Heart right ventricle (tissue), 16 donors: ENCODE measurements at regions of chr15 and their contacts with region 1.

Region 1: DNA sequence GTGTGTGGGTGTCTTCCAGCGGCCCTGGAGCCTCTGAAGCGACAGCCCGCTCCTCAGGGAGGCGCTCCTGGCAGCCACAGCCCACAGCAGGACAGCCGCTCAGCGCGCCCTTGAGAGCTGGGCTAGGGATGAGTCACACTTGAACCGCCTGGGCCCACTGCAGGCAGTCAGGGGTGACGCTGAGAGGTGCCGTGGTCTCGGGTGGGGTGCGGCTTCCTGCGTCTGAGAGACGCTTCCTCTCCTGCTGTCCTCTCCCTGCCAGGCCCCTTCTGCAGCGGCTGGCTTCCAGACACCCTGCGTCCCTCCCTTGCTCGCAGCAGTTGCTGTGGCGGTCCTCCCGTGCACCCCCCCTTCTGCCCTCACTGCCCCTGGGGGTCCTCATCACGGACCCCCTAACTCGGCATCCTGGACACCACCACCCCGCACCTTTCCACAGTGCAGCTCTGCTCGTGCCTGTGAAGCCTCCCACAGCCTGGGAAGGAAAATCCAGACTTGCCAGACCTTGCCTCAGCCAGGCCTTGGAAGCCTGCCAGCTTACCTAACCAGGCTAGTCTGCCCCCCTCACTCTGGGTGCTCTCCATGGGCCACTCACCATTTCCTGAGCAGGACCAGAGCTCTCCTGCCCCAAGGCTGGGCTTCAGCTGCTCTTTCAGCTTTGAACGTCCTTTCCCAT is 1.1 kb upstream of the SPTBN5 start:
- DNase-seq: peak; percentile 82 to 86
- ATAC-seq: peak; percentile 74 to 92 (median 88)
- H3K4me3 ChIP-seq: peak overlapping the region in 9 of 10 donors; percentile 26 to 55 (median 51)
- H3K27ac ChIP-seq: peak overlapping the region; percentile 77 to 93 (median 86)
- H3K4me1 ChIP-seq: peaks cover 19 to 43% (median 30%) of the 10 kb centered on the region in 9 donors
- H3K27me3 ChIP-seq: no peaks in the 10 kb centered on the region
- CTCF ChIP-seq: peak in 5 of 9 donors; percentile 17 to 52 (median 40)

Region 2: GRCh38 chr15:41774062-41774881 is 120.7 kb before region 1 on chr15 and contains the start of gene MAPKBP1:
- intact Hi-C with region 1: loop called in 3 of 10 experiments (anchors 5 to 10 kb)
- DNase-seq: peak; percentile 96 to 97
- ATAC-seq: peak; percentile 96 to 99 (median 98)
- H3K4me3 ChIP-seq: peak within 1 kb of the TSS; percentile 45 to 85 (median 77)
- H3K27ac ChIP-seq: peak within 1 kb of the TSS; percentile 52 to 88 (median 84)
- H3K4me1 ChIP-seq: peaks cover 13 to 55% (median 43%) of the 10 kb centered on the region in 9 donors
- H3K27me3 ChIP-seq: no peaks in the 10 kb centered on the region
- CTCF ChIP-seq: peak; percentile 29 to 84 (median 64)
- total RNA-seq, gene MAPKBP1: 8.3 to 17.0 (median 13.3) TPM

Region 3: DNA sequence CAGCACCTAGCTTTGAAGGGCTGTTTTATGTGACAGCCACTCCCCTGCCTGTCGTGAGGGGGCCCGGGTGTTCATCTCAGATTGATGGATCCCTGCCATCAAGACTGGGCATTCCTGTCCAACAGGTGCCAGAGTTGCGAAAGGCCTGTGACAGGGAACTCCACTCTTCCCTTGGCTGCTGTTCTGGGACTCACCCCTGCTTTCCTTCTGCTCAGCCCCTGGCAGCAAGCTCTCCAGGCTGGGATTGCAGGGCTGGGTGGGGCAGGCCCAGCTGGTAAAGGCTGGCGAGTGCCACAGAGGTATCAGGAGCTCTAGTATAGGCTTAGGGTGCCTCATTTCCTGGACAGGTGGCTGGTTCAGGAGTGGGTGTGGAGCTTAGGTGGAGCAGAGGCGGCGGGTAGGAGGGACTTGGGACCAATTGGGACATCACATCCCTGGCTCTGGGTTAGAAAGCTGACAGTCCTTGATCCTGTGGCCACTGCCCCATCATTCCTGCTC is 56.5 kb before region 1 on chr15 and contains the start of gene PLA2G4B:
- intact Hi-C with region 1: loop called in 4 of 10 experiments (anchors 5 to 10 kb)
- DNase-seq: no peak
- ATAC-seq: peak in 5 of 8 donors; percentile 14 to 36 (median 21)
- H3K4me3 ChIP-seq: no peak within 1 kb of the TSS
- H3K27ac ChIP-seq: no peak within 1 kb of the TSS
- H3K4me1 ChIP-seq: peaks cover 0 to 13% (median 4%) of the 10 kb centered on the region in 9 donors
- H3K27me3 ChIP-seq: no peaks in the 10 kb centered on the region
- CTCF ChIP-seq: no peak
- total RNA-seq, gene PLA2G4B: 1.6 to 6.7 (median 3.2) TPM